Activated T-helper 2 cell treated with anti-CD3 and anti-CD28 coated beads, Interferon-gamma antibody, Interleukin-2, Interleukin-4, amounts not matched to agents 10 μg/mL and 5 μg/mL and 100 μg/mL, durations not matched to agents 14 hours and 24 hours and 36 hours (primary cell): ENCODE measurements at regions of chr2 and their contacts with region 1.

Region 1: DNA sequence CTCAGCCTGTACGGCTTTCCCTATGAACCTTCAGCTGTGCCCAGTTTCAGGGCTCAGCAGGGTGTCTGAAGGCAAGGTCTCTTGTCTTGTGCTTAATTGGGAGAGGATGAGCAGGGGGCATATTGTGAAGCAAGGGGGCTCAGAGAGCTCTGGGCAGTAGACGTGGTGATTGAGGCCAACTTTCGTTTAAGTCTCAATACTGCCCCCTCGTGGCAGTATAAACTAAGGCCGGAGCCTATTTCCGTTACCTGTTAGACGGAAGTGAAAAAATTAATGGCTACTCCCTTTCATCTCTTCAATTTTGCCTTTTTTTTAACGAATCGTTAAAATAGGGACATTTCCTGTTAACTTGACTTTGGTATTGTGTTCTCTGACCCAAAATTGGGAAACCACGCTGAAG is 193.4 kb downstream of the TDRD15 start:
- DNase-seq: peak; percentile 10
- H3K4me3 Mint-ChIP-seq: no peak overlapping the region
- H3K27ac Mint-ChIP-seq: no peak overlapping the region
- H3K4me1 Mint-ChIP-seq: no peaks in the 10 kb centered on the region
- H3K27me3 Mint-ChIP-seq: no peaks in the 10 kb centered on the region

Region 2: DNA sequence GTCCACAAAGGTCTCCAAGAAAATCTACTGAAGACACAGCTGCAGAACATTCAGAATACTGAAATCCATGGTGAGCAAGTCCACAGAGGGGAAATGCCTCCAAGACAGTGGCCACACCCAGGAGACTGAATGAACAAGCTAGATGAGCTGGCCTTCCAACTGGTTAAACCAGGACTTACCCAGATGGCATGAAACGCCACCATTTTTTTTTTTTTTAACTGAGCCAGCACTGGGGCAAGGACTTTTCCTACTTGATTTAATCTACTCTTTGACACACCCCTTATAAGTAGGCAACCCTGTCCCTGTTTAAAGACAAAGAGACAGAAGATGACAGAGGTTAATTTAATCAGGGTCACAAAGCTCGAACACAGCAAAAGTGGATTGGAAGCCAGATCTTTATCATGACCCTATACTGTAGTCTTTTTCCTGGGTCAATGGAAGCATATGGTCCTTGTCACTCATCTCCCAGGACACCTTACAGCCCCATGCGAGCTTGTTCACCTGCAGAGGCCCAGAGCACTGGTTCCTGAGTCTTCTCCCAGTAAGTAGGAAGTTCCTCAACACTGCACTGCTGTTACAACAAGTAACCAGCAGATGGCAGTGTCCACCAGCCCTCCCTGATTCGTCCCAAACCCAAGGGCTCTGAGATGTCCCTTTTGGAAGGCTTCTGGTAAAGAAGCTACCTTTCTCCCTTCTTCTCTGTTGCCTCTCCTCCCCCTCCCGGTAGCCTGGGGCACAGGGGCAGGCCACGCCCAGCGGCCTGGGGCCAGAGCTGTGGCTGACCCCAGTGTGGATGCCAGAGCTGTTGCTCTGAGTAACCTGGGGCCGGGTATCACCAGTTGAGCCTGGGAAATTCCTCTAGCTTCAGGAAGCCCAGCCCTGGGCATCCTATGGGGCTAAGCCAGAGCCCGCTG is 655.8 kb before region 1 on chr2:
- intact Hi-C with region 1: loop called (anchors 5 kb)
- DNase-seq: peak; percentile 55
- H3K4me3 Mint-ChIP-seq: no peak overlapping the region
- H3K27ac Mint-ChIP-seq: no peak overlapping the region
- H3K4me1 Mint-ChIP-seq: no peaks in the 10 kb centered on the region
- H3K27me3 Mint-ChIP-seq: peaks cover 66% of the 10 kb centered on the region